Panc1 (cell line): ENCODE measurements at regions of chr6 and their contacts with region 1.

Region 1: DNA sequence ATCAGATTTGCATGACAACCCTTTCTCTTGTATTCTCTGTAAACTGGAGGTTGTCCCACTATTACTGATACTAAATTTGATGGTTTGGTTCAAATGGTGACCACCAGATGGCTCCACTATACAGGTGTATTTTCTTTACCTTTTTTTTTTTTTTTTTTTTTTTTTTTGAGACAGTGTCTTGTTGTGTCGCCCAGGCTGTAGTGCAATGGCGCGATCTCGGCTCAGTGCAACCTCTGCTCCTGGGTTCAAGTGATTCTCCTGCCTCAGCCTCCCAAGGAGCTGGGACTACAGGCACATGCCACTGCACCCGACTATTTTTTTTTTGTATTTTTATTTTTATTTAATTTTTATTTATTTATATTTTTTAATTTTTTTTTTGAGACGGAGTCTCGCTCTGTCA is 6.6 kb upstream of the WTAP start:
- DNase-seq: no peak
- ATAC-seq: no peak; the same call in 1 of the 2 replicates
- H3K4me3 ChIP-seq: no peak overlapping the region
- H3K27ac ChIP-seq: no peak overlapping the region
- H3K4me1 ChIP-seq: peaks cover 9% of the 10 kb centered on the region; the same call in 1 of the 2 replicates
- H3K27me3 ChIP-seq: no peaks in the 10 kb centered on the region
- CTCF ChIP-seq: peak; percentile 68

Region 2: DNA sequence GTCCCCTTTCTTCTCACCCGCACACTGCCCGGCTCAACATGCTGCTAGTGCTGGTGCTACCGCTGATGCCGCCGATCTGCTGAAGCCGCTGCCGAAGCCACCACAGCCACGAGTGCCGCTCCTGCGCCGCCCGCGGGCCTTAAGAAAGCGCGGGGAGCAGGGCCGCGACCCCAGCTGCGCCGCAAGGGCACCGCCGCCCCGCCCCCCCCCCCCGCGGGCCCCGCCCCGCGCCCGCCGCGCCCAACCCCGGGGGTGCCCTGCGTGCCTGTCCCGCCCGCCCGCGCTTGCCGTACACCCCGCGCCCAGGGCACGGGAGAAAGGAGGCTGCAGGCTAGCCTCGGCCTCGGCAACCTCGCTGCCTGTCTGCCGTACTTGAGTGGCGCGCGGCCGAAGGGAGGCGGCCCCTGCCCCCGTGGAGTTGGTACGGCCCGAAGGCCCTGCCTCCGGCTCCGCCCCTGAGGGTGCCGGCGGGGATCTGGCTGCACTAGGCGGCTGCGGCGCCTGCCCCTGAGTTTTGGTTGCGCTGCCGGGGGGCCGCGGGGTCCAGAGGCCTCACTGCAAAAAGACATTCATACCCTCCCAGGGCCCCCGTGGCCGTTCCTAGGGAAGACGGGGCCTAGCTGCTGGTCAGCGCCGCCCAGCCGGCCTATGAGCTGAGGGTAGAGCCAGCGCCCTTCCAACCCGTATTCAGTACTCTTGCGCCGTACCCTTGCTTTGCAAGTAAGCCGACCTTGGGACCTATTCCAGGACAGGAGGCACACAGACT is 27.4 kb before region 1 on chr6 and contains the start of gene SOD2:
- CTCF ChIA-PET with region 1: no interaction called
- POLR2A ChIA-PET with region 1: interaction called, 16 read pairs
- in situ Hi-C with region 1: no loop called
- intact Hi-C with region 1: loop called (anchors 5 kb)
- DNase-seq: no peak
- ATAC-seq: peak; percentile 92
- H3K4me3 ChIP-seq: peak within 1 kb of the TSS; percentile 69 to 72
- H3K27ac ChIP-seq: peak within 1 kb of the TSS; percentile 95
- H3K4me1 ChIP-seq: peaks cover 21% of the 10 kb centered on the region
- H3K27me3 ChIP-seq: no peaks in the 10 kb centered on the region
- CTCF ChIP-seq: no peak
- total RNA-seq, gene SOD2: 180 TPM

Region 3: GRCh38 chr6:159754959-159755914 is 34.5 kb after region 1 on chr6:
- CTCF ChIA-PET with region 1: no interaction called
- POLR2A ChIA-PET with region 1: no interaction called
- in situ Hi-C with region 1: no loop called
- intact Hi-C with region 1: no loop called
- DNase-seq: no peak
- ATAC-seq: 0 out of 2 replicates have a peak, but pooled peaks have one; percentile 35
- H3K4me3 ChIP-seq: no peak overlapping the region
- H3K27ac ChIP-seq: no peak overlapping the region
- H3K4me1 ChIP-seq: peaks cover 8% of the 10 kb centered on the region
- H3K27me3 ChIP-seq: no peaks in the 10 kb centered on the region
- CTCF ChIP-seq: no peak

Region 4: DNA sequence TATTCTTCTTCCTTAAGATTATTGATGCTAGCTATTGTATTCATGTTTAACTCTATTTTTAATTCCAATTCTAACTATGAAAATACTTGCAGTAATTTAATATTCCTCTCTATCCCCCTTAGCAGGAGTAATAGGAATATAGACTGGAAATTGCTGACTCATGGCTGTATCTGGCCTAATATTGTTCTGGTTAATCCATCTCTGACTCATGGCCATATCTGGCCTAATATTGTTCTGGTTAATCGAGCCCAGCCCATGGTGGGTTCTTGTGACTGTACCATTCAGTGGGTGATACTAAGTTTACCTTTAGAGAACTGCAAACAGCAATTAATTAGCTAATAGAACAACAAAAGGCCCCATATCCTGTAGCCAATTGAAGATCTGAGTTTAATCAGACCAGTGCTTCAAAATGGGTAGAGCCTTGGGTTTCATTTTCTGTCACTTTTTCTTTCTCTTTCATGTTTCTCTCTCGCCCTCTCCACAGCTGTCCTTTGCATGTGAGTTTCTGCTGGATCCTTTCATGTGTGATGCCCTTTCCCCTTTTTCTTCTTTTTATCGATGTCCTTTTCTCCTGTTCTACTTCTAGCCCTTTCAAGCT is 678.1 kb after region 1 on chr6:
- CTCF ChIA-PET with region 1: interaction called, 10 read pairs
- POLR2A ChIA-PET with region 1: no interaction called
- in situ Hi-C with region 1: no loop called
- intact Hi-C with region 1: no loop called
- DNase-seq: no peak
- ATAC-seq: no peak
- H3K4me3 ChIP-seq: no peak overlapping the region
- H3K27ac ChIP-seq: no peak overlapping the region
- H3K4me1 ChIP-seq: no peaks in the 10 kb centered on the region
- H3K27me3 ChIP-seq: no peaks in the 10 kb centered on the region
- CTCF ChIP-seq: no peak